H1 (cell line): ENCODE measurements at regions of chr17 and their contacts with region 1.

Region 1: GRCh38 chr17:41885733-41886132 is 20.5 kb upstream of the KLHL11 start:
- DNase-seq: no peak
- H3K4me3 ChIP-seq: no peak overlapping the region
- H3K27ac ChIP-seq: no peak overlapping the region
- H3K4me1 ChIP-seq: no peaks in the 10 kb centered on the region; a peak in 1 of 7 replicates
- H3K27me3 ChIP-seq: no peaks in the 10 kb centered on the region
- CTCF ChIP-seq: peak; percentile 22 to 38 (median 29); a peak in 3 of 4 replicates
- EP300 ChIP-seq: no peak
- POLR2A ChIP-seq: no peak
- RAD21 ChIP-seq: peak; percentile 45 to 64

Region 2: GRCh38 chr17:41131979-41132378 is 753.8 kb before region 1 on chr17:
- CTCF ChIA-PET with region 1: no interaction called
- POLR2A ChIA-PET with region 1: no interaction called
- DNase-seq: no peak
- H3K4me3 ChIP-seq: no peak overlapping the region
- H3K27ac ChIP-seq: no peak overlapping the region
- H3K4me1 ChIP-seq: no peaks in the 10 kb centered on the region
- H3K27me3 ChIP-seq: no peaks in the 10 kb centered on the region
- CTCF ChIP-seq: no peak
- EP300 ChIP-seq: no peak
- POLR2A ChIP-seq: no peak
- RAD21 ChIP-seq: no peak

Region 3: DNA sequence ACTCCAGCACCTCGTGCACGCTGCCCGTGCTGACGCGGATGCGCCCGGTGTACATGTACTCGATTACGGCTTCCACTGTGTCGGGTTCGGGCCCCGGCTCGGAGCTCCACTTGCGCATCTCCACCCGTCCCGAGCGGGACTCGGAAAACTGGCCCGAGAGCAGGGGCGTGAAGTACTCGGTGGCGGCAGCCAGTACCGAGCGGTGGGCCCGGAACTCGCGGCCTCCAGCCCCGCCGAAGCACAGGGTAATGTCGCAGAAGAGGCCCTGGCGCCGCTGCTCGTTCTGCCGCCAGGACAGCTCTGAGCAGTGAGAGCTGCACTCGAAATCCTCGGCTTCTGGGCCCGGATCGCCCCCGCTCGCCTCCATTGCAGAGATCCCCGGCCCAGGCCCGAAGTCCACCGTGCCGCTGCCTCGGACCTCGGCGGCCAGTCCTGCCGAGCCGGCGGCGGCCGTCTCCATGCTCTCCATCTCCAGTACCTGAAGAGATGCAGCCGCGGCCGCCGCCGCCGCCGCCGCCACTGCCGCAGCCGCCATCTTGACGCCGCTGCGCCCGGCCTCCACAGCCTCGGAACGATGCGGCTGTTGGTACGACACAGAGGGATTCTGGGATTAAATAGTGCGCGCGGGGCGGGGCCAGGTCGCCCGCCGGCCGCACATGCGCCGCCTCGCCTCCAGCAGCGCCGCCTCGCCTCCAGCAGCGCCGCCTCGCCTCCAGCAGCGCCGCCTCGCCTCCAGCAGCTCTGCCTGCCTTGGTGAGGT is 20.7 kb before region 1 on chr17 and contains the start of gene KLHL11:
- CTCF ChIA-PET with region 1: interaction called, 3 read pairs
- POLR2A ChIA-PET with region 1: interaction called, 12 read pairs
- DNase-seq: peak; percentile 58 to 90
- H3K4me3 ChIP-seq: peak within 1 kb of the TSS; percentile 86 to 94 (median 92)
- H3K27ac ChIP-seq: peak within 1 kb of the TSS; percentile 42
- H3K4me1 ChIP-seq: peaks cover 9 to 25% (median 13%) of the 10 kb centered on the region in 4 experiments
- H3K27me3 ChIP-seq: no peaks in the 10 kb centered on the region
- CTCF ChIP-seq: no peak; a peak in 1 of 4 replicates
- EP300 ChIP-seq: peak in 1 of 2 experiments; percentile 56; a peak in 1 of 3 replicates
- POLR2A ChIP-seq: peak; percentile 42 to 87
- RAD21 ChIP-seq: peak in 1 of 2 experiments; percentile 0; a peak in 2 of 4 replicates
- total RNA-seq, gene KLHL11: 12.8 and 13.7 TPM in 2 replicates

Region 4: DNA sequence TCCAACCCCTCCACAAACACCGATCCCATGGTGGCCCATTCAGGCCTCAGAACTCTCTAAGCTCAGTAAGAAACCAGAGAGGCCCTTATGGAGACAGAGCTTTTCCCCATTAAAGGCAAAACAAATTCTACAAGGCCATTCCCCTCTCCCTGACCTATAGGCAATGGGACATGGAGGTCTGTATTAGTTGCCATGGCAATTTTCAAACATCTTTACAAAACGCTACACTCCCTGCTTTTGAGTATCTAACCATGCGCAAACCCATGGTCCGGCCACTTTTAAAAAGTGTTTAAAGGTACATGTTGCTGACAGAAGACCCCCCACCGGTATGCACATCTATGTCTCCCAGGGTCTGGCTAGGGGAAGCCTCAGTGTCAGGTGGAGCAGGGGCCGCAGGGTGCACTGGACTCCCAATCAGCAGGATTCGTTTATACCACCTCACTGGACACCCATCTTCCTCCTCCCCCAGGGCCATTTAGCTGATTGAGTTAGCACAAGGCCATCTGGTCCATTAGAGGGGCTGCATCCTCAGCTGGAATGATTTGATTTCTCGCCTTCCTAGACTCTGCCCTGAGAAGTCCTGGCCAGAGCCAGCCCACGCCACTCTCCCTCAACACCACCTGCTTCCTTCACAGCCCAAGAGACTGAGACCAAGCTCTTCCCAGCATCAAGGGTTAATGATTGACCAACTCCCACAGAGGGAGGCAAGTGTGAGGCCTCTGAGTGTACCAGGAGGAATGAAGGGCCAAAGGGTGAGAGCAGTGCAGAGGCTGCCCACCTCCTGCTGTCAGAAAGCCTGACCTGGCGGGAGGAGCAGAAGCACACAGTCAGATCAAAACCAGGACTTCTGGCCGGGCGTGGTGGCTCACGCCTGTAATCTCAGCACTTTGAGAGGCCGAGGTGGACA is 22.2 kb after region 1 on chr17:
- CTCF ChIA-PET with region 1: interaction called, 12 read pairs
- POLR2A ChIA-PET with region 1: interaction called, 6 read pairs
- DNase-seq: no peak
- H3K4me3 ChIP-seq: no peak overlapping the region
- H3K27ac ChIP-seq: peak overlapping the region; percentile 48; the same call in 1 of the 2 replicates
- H3K4me1 ChIP-seq: no peaks in the 10 kb centered on the region; a peak in 1 of 7 replicates
- H3K27me3 ChIP-seq: no peaks in the 10 kb centered on the region
- CTCF ChIP-seq: no peak
- EP300 ChIP-seq: no peak
- POLR2A ChIP-seq: no peak; a peak in 1 of 3 replicates
- RAD21 ChIP-seq: no peak